ENCODE measurements at regions of chr4 and their contacts with region 1.

Region 1: DNA sequence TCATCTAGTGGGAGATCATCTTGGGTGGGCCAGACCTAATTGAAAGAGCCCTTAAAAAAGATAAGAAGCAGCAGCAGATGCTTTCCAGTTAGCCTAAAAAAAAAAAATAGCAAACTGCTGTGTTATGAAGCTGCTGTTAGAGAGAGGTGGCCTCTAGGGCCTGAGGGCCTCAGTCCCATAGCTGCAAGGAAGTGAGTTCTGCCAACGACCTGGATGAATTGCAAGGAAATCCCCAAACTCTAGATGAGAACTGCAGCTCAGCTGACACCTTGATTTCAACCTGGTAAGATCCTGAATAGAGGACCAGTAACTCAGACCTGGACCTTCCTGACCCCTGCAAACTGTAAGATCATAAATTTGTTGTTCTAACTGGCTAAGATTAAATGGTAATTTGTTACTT is 275.2 kb downstream of the TENM3 start:
- DNase-seq: no peak
- H3K27ac ChIP-seq: no peak overlapping the region
- CTCF ChIP-seq: no peak

Region 2: DNA sequence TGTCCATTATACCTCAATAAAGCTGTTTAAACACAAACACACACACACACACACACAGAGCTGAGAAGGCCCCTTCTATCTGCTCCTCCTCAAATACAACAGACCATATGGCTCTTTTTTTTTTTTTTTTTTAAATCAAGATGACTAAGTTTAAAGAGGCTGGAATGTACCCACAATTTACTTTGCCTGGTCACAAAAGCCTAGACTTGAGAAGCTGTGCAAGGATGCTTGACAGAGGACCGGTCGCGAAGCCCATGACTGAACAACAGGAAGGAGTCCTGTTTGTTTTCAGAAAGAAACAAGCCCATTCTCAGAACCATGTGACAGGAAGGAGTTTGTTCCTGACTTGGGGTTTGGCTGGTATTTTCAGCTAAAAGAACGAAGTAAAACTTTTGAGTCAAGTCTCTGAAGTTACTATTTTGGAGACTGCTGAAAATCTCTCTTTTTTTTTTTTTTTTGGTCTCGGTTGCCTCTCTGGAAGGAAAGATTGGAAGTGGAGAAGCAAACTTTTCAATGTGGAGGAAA is 926.1 kb before region 1 on chr4:
- CTCF ChIA-PET with region 1: interaction called, 10 read pairs
- POLR2A ChIA-PET with region 1: no interaction called
- DNase-seq: no peak
- H3K27ac ChIP-seq: no peak overlapping the region
- CTCF ChIP-seq: no peak

Region 3: DNA sequence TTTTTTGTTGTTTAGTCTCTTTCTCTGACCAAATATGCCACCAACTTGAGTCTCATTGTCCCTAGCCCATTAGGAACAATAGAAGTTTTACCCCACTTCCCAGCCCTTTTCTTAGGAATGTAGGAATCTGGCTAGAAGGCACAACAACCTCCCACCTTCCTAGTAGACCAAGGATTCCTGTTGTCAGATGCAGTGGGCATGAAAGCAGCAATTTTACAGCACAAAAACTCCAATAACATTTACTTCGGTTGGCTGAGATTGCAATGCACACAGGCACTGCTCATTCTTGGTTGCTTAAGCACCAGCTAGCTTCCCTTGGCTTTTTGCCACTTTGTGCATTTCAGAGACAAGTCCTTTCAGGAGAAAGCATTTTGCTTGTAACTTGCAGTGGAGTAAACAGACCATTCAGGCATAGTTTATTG is 37.6 kb after region 1 on chr4:
- CTCF ChIA-PET with region 1: no interaction called
- POLR2A ChIA-PET with region 1: no interaction called
- DNase-seq: peak; percentile 10
- H3K27ac ChIP-seq: no peak overlapping the region
- CTCF ChIP-seq: no peak